Right cardiac atrium (tissue), 5 donors: ENCODE measurements at regions of chr20 and their contacts with region 1.

Region 1: GRCh38 chr20:47677635-47678453 is 107.4 kb downstream of the SULF2 start:
- DNase-seq: no peak
- ATAC-seq: no peak
- H3K4me3 ChIP-seq: no peak overlapping the region
- H3K27ac ChIP-seq: no peak overlapping the region
- H3K4me1 ChIP-seq: peaks cover 5% of the 10 kb centered on the region
- H3K27me3 ChIP-seq: no peaks in the 10 kb centered on the region

Region 2: DNA sequence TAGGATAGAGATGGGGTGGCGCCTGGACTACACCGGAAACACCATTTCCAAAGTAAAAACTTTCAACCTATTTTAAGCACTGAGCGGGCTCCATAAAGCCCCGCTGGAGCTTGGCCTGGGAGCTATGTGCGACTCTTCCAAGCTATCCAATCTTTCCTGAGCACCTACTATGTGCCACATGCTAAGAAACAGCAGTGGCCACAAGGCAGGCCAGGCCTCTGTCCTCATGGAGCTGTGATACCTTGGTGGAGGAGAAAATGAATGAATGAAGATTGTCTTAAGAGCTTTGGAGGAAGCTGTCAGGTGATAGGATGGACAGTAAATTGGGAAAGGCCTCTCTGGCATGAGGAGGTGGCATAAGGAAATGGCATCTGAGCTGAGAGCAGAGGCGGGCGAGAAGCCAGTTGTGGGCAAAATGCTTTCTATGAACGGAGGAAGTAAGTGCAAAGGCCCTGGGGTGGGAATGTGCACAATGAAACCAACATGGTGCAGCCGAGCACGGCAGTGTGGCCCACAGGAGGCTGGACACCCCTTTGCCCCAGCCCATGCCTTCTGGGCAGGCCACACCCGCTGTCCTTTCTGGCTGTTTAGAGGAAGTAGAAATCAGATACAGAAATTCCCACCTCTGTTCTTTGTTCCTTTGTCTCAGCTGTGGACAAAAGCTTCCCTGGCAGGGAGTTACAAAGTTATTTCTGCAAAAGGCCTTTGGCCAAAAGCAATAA is 95.3 kb after region 1 on chr20:
- intact Hi-C with region 1: loop called in 1 of 4 experiments (anchors 10 kb)
- DNase-seq: peak; percentile 62 to 85 (median 79)
- ATAC-seq: peak; percentile 80 to 87
- H3K4me3 ChIP-seq: no peak overlapping the region
- H3K27ac ChIP-seq: peak overlapping the region; percentile 42
- H3K4me1 ChIP-seq: peaks cover 7% of the 10 kb centered on the region
- H3K27me3 ChIP-seq: no peaks in the 10 kb centered on the region

Region 3: DNA sequence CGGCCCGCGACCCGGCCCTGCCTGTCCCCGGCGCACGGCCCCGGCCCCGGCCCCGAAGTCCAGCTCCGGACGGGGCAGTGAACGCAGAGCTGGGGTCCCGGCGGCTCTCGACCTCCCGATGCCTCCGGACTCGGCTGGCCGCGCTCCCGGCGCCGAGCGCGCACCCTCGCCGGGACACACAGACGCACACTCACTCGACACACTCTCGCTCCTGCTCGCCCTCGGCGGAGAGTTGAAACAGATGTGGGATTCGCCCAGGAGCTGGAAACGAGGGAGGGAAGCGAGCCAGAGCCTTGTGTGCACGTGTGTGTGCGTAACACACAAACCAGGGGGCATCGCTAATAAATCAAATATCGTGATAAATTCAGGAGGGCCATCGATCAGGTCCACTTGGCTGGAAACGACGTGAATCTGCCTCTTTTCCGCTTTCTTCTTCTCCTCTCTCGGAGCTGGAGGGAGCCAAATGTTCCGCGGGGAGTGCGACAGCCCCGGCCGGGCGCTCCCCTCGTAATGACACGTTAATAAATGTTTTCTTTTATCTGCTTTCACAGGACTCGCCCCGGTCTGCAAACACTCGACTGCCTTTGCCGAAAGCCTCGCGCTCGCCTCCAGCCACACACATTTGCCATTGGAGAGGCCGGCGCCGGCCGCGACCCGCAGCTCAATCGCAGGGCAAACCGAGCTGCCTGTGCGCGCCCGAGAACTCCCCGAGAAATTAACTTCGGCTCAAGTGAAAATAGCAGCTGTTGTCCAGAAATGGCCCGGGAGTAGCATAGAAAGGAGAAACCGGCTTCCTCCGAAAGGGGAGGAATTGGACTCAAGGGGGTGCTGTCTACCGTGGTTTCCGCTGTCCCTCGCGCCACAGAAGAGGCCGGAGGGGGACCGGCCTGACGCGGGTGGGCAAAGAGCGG is 108.3 kb after region 1 on chr20:
- intact Hi-C with region 1: loop called in 1 of 4 experiments (anchors 10 kb)
- DNase-seq: peak; percentile 70 to 84 (median 84)
- ATAC-seq: peak; percentile 81 to 89
- H3K4me3 ChIP-seq: peak overlapping the region; percentile 82
- H3K27ac ChIP-seq: peak overlapping the region; percentile 13
- H3K4me1 ChIP-seq: peaks cover 5% of the 10 kb centered on the region
- H3K27me3 ChIP-seq: no peaks in the 10 kb centered on the region

Region 4: DNA sequence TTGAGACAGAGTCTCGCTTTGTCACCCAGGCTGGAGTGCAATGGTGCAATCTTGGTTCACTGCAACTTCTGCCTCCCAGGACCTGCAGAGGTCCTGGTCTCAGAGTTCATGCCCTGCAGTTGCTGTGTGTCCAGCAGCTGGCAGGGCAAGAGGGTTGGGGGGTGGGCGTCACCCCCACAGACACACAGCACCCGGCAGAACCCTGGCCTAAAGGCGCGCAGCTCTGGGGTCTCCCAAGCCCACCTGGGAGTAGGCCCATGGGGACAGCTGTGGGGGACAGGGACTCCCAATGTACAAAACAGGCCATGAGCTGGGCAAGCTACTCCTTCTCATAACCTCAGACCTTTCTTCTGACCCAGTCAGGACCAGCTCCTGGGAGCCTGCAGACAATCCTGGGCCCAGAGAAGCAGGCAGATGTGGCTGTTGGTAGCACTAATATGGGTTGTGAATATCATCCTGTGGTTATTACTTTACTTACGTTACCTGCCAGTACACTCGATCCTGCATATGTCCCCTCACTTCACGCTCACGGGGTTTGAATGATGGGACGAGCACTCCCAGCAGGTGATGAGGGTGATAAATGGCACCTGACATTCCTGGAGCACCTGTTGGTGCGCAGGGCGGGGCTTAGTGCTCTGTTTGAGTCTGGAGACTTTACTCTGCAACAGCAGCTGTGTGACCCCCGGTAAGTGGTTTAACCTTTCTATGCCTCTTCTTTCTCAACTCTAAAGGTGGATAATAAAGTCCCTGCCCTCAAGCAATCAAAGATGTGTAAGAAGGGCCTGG is 147.3 kb after region 1 on chr20:
- intact Hi-C with region 1: no loop called
- DNase-seq: no peak
- ATAC-seq: no peak
- H3K4me3 ChIP-seq: no peak overlapping the region
- H3K27ac ChIP-seq: no peak overlapping the region
- H3K4me1 ChIP-seq: no peaks in the 10 kb centered on the region
- H3K27me3 ChIP-seq: no peaks in the 10 kb centered on the region

Region 5: GRCh38 chr20:48620519-48621254 is 942.8 kb after region 1 on chr20:
- intact Hi-C with region 1: loop called in 3 of 4 experiments (anchors 5 kb)
- DNase-seq: peak; percentile 88 to 95 (median 95)
- ATAC-seq: peak; percentile 90 to 93
- H3K4me3 ChIP-seq: peak overlapping the region; percentile 26
- H3K27ac ChIP-seq: no peak overlapping the region
- H3K4me1 ChIP-seq: no peaks in the 10 kb centered on the region
- H3K27me3 ChIP-seq: no peaks in the 10 kb centered on the region